Ovary (tissue), 10 donors: ENCODE measurements at regions of chr2 and their contacts with region 1.

Region 1: DNA sequence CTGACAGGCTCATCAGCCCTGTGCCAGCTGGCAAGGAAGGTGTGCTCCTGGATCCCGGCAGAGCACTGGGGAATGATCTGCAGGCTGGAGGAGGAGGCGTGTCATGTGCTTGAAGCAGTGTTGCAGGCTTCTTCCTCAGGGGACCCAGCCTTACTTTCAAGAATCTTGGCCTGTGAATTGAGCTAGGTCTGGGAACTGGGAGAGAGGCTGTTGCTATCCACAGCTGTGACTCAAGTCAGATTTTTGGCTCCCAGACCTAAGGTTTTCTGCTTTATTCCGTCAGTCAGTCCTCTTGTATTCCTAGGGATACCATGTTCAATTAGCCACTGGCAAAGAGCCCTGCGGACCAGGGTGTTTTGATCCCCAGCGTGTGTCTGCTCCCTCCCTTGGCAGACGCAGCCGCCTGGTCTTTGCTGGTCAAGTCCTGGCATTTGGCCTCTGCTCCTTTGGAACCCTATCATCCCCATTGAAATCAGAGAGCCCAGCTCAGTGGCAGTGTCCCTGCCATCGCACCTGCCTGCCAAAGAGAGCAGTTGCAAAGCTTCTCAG is 32.4 kb downstream of the ASB1 start:
- DNase-seq: peak in 2 of 5 donors; percentile 29 to 30
- H3K4me3 ChIP-seq: no peak overlapping the region
- H3K27ac ChIP-seq: no peak overlapping the region
- H3K4me1 ChIP-seq: no peaks in the 10 kb centered on the region
- H3K27me3 ChIP-seq: no peaks in the 10 kb centered on the region
- CTCF ChIP-seq: no peak
- EP300 ChIP-seq: no peak
- POLR2A ChIP-seq: no peak

Region 2: GRCh38 chr2:238433941-238434845 is 25.0 kb before region 1 on chr2:
- intact Hi-C with region 1: loop called in 1 of 4 experiments (anchors 2 kb)
- DNase-seq: no peak
- H3K4me3 ChIP-seq: no peak overlapping the region
- H3K27ac ChIP-seq: no peak overlapping the region
- H3K4me1 ChIP-seq: peaks cover 1% of the 10 kb centered on the region
- H3K27me3 ChIP-seq: no peaks in the 10 kb centered on the region
- CTCF ChIP-seq: no peak
- EP300 ChIP-seq: no peak
- POLR2A ChIP-seq: no peak